ENCODE measurements at regions of chr13 and their contacts with region 1.

Region 1: DNA sequence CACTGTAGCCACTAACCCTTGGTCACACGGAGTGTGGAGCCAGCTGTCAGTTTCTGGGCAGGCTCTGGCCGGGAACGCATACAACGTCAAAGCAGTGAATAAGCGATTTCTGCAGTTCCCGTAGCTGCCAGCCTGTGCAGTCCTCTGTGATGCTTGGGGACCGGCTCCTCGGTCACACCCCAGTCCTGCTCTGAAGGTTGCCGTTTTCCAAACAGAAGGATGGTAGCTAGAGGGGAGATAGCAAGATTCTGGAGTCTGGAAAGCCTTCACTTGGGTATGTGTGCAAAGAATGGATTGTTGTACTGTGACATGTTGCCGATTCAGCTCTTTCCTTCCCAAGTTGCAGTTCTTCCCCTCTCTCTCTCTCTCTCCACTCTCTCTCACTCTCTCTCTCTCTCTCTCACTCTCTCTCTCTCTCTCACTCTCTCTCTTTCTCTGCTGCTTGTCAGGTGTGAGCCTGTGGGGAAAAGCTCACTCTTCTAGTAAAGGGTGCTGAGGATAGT is 38.7 kb upstream of the C1QTNF9 start:
- DNase-seq: peak in 8 of 9 experiments; percentile 40 to 86 (median 68)
- ATAC-seq: peak; percentile 32
- H3K4me3 ChIP-seq: peak overlapping the region; percentile 32 to 54
- H3K4me3 Mint-ChIP-seq: peak overlapping the region; percentile 85
- H3K27ac ChIP-seq: peak overlapping the region; percentile 81 to 94
- H3K27ac Mint-ChIP-seq: peak overlapping the region; percentile 99
- H3K4me1 ChIP-seq: peaks cover 91% of the 10 kb centered on the region
- H3K4me1 Mint-ChIP-seq: peaks cover 94% of the 10 kb centered on the region
- H3K27me3 ChIP-seq: no peaks in the 10 kb centered on the region
- H3K27me3 Mint-ChIP-seq: no peaks in the 10 kb centered on the region
- CTCF ChIP-seq: no peak

Region 2: DNA sequence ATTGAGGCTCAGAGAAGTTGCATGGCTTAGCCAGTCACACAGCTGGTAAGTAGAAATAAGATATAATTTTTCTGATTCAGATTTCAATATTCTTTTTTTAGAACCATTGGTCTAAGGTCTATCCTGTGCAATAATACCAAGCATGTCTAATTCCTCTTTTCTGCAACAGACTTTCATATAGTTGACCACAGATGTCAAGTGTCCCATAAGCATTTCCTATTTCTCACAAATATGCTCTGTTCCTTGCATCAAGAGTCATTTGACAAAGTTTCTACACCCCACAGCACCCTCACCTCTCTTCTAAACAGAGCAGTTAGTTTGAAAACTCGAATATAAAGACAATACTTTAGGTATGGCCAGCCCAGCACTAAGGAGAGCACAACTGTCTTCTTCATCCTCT is 810.4 kb before region 1 on chr13:
- CTCF ChIA-PET with region 1: no interaction called
- POLR2A ChIA-PET with region 1: no interaction called
- intact Hi-C with region 1: no loop called
- DNase-seq: no peak
- ATAC-seq: no peak
- H3K4me3 ChIP-seq: no peak overlapping the region
- H3K4me3 Mint-ChIP-seq: no peak overlapping the region
- H3K27ac ChIP-seq: no peak overlapping the region
- H3K27ac Mint-ChIP-seq: no peak overlapping the region
- H3K4me1 ChIP-seq: no peaks in the 10 kb centered on the region
- H3K4me1 Mint-ChIP-seq: peaks cover 2% of the 10 kb centered on the region
- H3K27me3 ChIP-seq: no peaks in the 10 kb centered on the region
- H3K27me3 Mint-ChIP-seq: no peaks in the 10 kb centered on the region
- CTCF ChIP-seq: no peak

Region 3: GRCh38 chr13:23980160-23980551 is 290.5 kb before region 1 on chr13:
- CTCF ChIA-PET with region 1: no interaction called
- POLR2A ChIA-PET with region 1: no interaction called
- intact Hi-C with region 1: loop called in 1 of 2 experiments (anchors 5 kb)
- DNase-seq: peak; percentile 84 to 96 (median 90)
- ATAC-seq: peak; percentile 92
- H3K4me3 ChIP-seq: peak overlapping the region; percentile 56 to 79
- H3K4me3 Mint-ChIP-seq: peak overlapping the region; percentile 86
- H3K27ac ChIP-seq: peak overlapping the region in 1 of 2 experiments; percentile 51
- H3K27ac Mint-ChIP-seq: peak overlapping the region; percentile 34
- H3K4me1 ChIP-seq: peaks cover 10% of the 10 kb centered on the region
- H3K4me1 Mint-ChIP-seq: peaks cover 8% of the 10 kb centered on the region
- H3K27me3 ChIP-seq: peaks cover 8 to 10% of the 10 kb centered on the region in 2 experiments
- H3K27me3 Mint-ChIP-seq: peaks cover 17% of the 10 kb centered on the region
- CTCF ChIP-seq: no peak

Region 4: GRCh38 chr13:24228852-24229458 is 41.7 kb before region 1 on chr13:
- CTCF ChIA-PET with region 1: interaction called, 15 read pairs
- POLR2A ChIA-PET with region 1: interaction called, 5 read pairs
- intact Hi-C with region 1: loop called in 1 of 2 experiments (anchors 2 kb)
- DNase-seq: peak in 5 of 9 experiments; percentile 34 to 80 (median 49)
- ATAC-seq: peak; percentile 51
- H3K4me3 ChIP-seq: no peak overlapping the region
- H3K4me3 Mint-ChIP-seq: no peak overlapping the region
- H3K27ac ChIP-seq: no peak overlapping the region
- H3K27ac Mint-ChIP-seq: no peak overlapping the region
- H3K4me1 ChIP-seq: peaks cover 23% of the 10 kb centered on the region
- H3K4me1 Mint-ChIP-seq: peaks cover 51% of the 10 kb centered on the region
- H3K27me3 ChIP-seq: no peaks in the 10 kb centered on the region
- H3K27me3 Mint-ChIP-seq: no peaks in the 10 kb centered on the region
- CTCF ChIP-seq: peak; percentile 93

Region 5: GRCh38 chr13:24288870-24289269 is 18.2 kb after region 1 on chr13:
- CTCF ChIA-PET with region 1: interaction called, 3 read pairs
- POLR2A ChIA-PET with region 1: interaction called, 15 read pairs
- intact Hi-C with region 1: no loop called
- DNase-seq: no peak
- ATAC-seq: no peak
- H3K4me3 ChIP-seq: no peak overlapping the region
- H3K4me3 Mint-ChIP-seq: no peak overlapping the region
- H3K27ac ChIP-seq: no peak overlapping the region
- H3K27ac Mint-ChIP-seq: no peak overlapping the region
- H3K4me1 ChIP-seq: no peaks in the 10 kb centered on the region
- H3K4me1 Mint-ChIP-seq: peaks cover 3% of the 10 kb centered on the region
- H3K27me3 ChIP-seq: no peaks in the 10 kb centered on the region
- H3K27me3 Mint-ChIP-seq: no peaks in the 10 kb centered on the region
- CTCF ChIP-seq: no peak

Region 6: DNA sequence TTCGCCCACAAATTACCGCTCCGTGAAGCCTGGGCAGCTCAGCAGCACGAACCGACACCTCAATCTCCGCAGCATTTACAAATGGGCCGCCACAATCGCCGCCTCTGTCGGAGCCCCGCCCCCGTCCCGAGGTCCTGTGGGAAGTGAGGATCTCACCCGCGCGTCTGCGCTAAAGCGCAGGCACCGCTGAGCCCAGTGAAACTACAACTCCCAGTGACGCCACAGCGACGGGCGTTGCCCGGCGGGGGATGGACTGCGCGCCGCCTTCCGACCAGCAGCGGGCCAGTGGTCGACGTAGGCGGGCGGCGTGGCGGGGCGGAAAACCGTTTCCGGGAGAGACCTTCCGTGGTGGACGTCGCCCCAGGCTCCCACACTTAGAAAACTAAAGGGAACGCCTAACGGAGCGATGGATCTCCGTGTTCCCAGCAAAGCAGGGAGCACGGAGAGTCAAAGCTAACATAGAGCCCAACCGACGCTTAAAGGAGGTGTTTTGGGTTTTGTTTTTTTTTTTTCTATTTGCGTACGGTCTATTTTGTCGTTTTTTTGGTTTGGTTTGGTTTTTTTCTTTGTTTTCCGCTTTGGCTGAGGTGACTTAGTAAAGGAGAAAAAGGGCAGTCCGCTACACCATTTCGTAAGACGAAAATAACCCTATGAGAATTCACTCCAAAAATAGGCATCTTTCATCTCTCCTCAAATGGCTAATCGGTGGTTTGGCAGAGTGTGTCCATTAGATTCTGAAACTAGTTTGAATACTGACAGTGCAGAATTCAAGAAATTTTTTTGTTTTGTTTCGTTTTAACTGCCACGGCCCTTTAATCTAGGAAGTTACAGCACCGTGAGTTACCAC is 652.3 kb after region 1 on chr13:
- CTCF ChIA-PET with region 1: no interaction called
- POLR2A ChIA-PET with region 1: no interaction called
- intact Hi-C with region 1: loop called in 1 of 2 experiments (anchors 10 kb)
- DNase-seq: peak; percentile 85 to 96 (median 94)
- ATAC-seq: peak; percentile 99
- H3K4me3 ChIP-seq: peak overlapping the region; percentile 82 to 95
- H3K4me3 Mint-ChIP-seq: peak overlapping the region; percentile 96
- H3K27ac ChIP-seq: peak overlapping the region; percentile 70 to 94
- H3K27ac Mint-ChIP-seq: peak overlapping the region; percentile 92
- H3K4me1 ChIP-seq: peaks cover 9% of the 10 kb centered on the region
- H3K4me1 Mint-ChIP-seq: peaks cover 15% of the 10 kb centered on the region
- H3K27me3 ChIP-seq: no peaks in the 10 kb centered on the region
- H3K27me3 Mint-ChIP-seq: no peaks in the 10 kb centered on the region
- CTCF ChIP-seq: no peak

Region 7: GRCh38 chr13:25860845-25861244 is 1590.2 kb after region 1 on chr13:
- CTCF ChIA-PET with region 1: no interaction called
- POLR2A ChIA-PET with region 1: no interaction called
- intact Hi-C with region 1: no loop called
- DNase-seq: no peak
- ATAC-seq: no peak
- H3K4me3 ChIP-seq: no peak overlapping the region
- H3K4me3 Mint-ChIP-seq: no peak overlapping the region
- H3K27ac ChIP-seq: no peak overlapping the region
- H3K27ac Mint-ChIP-seq: no peak overlapping the region
- H3K4me1 ChIP-seq: no peaks in the 10 kb centered on the region
- H3K4me1 Mint-ChIP-seq: no peaks in the 10 kb centered on the region
- H3K27me3 ChIP-seq: no peaks in the 10 kb centered on the region
- H3K27me3 Mint-ChIP-seq: no peaks in the 10 kb centered on the region
- CTCF ChIP-seq: no peak